Activated B cell treated with CpG ODN at 0.5 μM for 24 hours (primary cell): ENCODE measurements at regions of chr2 and their contacts with region 1.

Region 1: DNA sequence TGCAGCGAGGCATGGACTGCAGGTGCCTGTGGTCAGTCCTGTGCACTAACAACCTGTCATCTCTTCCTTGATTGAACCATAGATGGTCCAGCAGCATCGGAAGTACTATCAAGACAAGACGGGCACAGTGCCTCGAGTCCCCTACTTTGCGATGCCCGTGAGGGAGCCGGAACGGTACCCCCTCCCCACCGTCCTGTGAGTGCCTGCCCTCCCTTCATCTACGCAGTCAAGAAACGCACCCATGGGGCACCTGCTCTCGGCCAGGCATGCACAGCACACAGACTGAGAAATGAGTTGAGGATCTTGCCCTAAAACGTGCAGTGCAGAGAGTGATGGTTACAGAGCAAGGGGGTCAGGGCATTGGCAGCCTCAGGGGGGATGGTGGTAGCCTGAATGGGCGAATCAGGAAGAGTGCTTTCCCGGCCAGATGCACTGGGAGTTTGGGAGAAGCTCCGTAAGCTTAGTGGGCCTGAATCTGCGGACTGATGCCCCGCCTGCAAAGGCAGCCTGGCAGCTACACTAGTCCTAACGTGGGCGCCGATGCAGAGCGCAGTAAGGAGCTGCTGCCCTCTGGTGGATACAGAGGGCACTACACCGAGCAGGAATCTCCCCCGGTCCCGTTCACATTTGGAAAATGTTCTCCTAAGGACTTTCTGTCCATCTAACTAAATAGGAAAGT is 63.6 kb downstream of the CIB4 start:
- DNase-seq: peak; percentile 49
- ATAC-seq: peak; percentile 84
- H3K4me3 Mint-ChIP-seq: no peak overlapping the region
- H3K27ac Mint-ChIP-seq: no peak overlapping the region
- H3K4me1 Mint-ChIP-seq: no peaks in the 10 kb centered on the region
- H3K27me3 Mint-ChIP-seq: peaks cover 30% of the 10 kb centered on the region
- CTCF ChIP-seq: no peak

Region 2: GRCh38 chr2:25951071-25951547 is 626.5 kb before region 1 on chr2:
- CTCF ChIA-PET with region 1: interaction called, 19 read pairs
- POLR2A ChIA-PET with region 1: no interaction called
- intact Hi-C with region 1: loop called (anchors 1 kb)
- DNase-seq: peak; percentile 51
- ATAC-seq: peak; percentile 86
- H3K4me3 Mint-ChIP-seq: no peak overlapping the region
- H3K27ac Mint-ChIP-seq: no peak overlapping the region
- H3K4me1 Mint-ChIP-seq: no peaks in the 10 kb centered on the region
- H3K27me3 Mint-ChIP-seq: no peaks in the 10 kb centered on the region
- CTCF ChIP-seq: peak; percentile 68

Region 3: GRCh38 chr2:26088032-26088643 is 489.4 kb before region 1 on chr2:
- CTCF ChIA-PET with region 1: interaction called, 4 read pairs
- POLR2A ChIA-PET with region 1: no interaction called
- intact Hi-C with region 1: loop called (anchors 5 kb)
- DNase-seq: no peak
- ATAC-seq: peak; percentile 45
- H3K4me3 Mint-ChIP-seq: no peak overlapping the region
- H3K27ac Mint-ChIP-seq: no peak overlapping the region
- H3K4me1 Mint-ChIP-seq: peaks cover 53% of the 10 kb centered on the region
- H3K27me3 Mint-ChIP-seq: no peaks in the 10 kb centered on the region
- CTCF ChIP-seq: no peak